ENCODE measurements at regions of chr14 and their contacts with region 1.

Region 1: DNA sequence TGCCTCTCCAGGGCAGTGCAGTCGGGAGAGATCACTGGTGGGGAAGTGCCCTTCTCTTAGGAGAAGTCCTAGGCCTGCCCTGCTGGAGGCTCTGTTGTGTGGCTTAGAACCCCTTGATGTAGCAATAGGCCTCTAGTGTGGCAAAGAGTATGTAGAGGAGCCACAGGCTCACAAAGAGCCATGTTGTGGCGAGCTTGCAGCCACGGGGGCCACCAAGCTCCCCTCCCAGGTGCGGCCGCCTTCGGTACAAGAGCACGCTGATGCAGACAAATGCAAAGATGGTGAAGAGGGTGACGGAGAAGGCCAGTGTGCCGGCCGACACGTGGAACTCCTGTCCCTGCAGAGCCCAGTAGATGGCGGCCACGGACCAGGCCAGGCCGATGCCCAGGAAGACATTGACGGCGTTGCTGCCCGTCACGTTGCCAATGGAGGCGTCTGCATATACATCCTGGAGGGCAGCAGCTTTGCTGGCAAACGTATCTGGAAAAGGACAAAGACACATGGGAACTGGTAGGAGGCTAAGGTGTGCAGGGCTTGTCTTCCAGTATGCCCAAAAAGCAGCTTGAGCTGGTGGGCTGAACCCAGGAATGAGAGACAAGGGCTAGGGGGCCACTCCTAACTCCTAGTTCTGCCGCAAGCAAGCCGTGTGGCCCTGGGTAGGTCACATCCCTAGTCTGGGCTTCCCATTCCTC is 142.8 kb downstream of the SLC8A3 start:
- DNase-seq: peak; percentile 56 to 82
- ATAC-seq: peak; percentile 83 to 89 (median 87)
- H3K4me3 ChIP-seq: no peak overlapping the region
- H3K27ac ChIP-seq: no peak overlapping the region
- H3K4me1 ChIP-seq: no peaks in the 10 kb centered on the region
- H3K27me3 ChIP-seq: no peaks in the 10 kb centered on the region
- CTCF ChIP-seq: peak; percentile 75

Region 2: GRCh38 chr14:69625299-69626131 is 420.5 kb before region 1 on chr14:
- intact Hi-C with region 1: no loop called
- DNase-seq: peak; percentile 52 to 76
- ATAC-seq: peak; percentile 42 to 70 (median 60)
- H3K4me3 ChIP-seq: no peak overlapping the region
- H3K27ac ChIP-seq: peak overlapping the region; percentile 38
- H3K4me1 ChIP-seq: peaks cover 71% of the 10 kb centered on the region
- H3K27me3 ChIP-seq: no peaks in the 10 kb centered on the region
- CTCF ChIP-seq: no peak

Region 3: DNA sequence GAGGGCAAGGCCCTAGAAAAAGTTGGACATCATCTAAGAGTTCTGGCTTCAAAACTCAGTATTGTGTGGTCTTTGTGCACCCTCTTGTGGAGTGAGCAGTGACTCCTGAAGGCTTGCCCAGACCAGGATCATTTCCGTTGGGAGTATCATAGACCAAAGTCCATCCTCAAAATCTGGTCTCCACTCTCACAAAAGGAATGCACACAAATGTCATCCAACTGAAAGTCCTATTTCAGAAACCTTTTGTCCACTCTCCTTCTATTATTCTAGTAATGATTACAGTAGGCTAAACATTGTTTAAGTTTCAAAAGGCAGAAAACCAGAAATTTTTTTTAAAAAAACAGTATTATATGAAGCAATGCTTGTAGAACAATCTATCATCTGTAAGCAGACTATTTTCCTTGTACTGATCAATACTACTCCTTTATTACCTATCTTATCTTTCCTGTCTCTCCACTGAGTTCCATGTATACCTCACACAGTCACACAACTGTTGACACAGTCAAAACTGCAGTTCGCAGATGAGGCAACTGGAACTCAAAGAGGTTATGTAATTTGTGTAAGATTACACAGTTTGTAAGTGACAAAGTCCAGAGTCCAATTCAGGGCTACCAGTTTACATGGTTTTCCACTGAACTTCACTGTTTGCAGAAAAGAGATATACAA is 272.1 kb after region 1 on chr14:
- intact Hi-C with region 1: loop called in 1 of 2 experiments (anchors 5 kb)
- DNase-seq: no peak
- ATAC-seq: peak; percentile 84 to 89 (median 86)
- H3K4me3 ChIP-seq: no peak overlapping the region
- H3K27ac ChIP-seq: no peak overlapping the region
- H3K4me1 ChIP-seq: no peaks in the 10 kb centered on the region
- H3K27me3 ChIP-seq: no peaks in the 10 kb centered on the region
- CTCF ChIP-seq: peak; percentile 45